Psoas muscle (tissue), 8 donors: ENCODE measurements at regions of chrX and their contacts with region 1.

Region 1: GRCh38 chrX:28997706-28998463 is 410.6 kb downstream of the IL1RAPL1 start:
- DNase-seq: no peak
- ATAC-seq: no peak
- H3K4me3 ChIP-seq: no peak overlapping the region
- H3K27ac ChIP-seq: no peak overlapping the region
- H3K4me1 ChIP-seq: no peaks in the 10 kb centered on the region
- H3K27me3 ChIP-seq: no peaks in the 10 kb centered on the region
- CTCF ChIP-seq: no peak

Region 2: GRCh38 chrX:28158019-28158777 is 839.7 kb before region 1 on chrX:
- intact Hi-C with region 1: loop called in 1 of 2 experiments (anchors 10 kb)
- DNase-seq: no peak
- ATAC-seq: no peak
- H3K4me3 ChIP-seq: no peak overlapping the region
- H3K27ac ChIP-seq: no peak overlapping the region
- H3K4me1 ChIP-seq: no peaks in the 10 kb centered on the region
- H3K27me3 ChIP-seq: no peaks in the 10 kb centered on the region
- CTCF ChIP-seq: no peak